ENCODE measurements at regions of chr19 and their contacts with region 1.

Region 1: GRCh38 chr19:34041925-34042521 is 130.3 kb upstream of the LSM14A start:
- DNase-seq: no peak
- H3K4me3 ChIP-seq: no peak overlapping the region
- H3K27ac ChIP-seq: no peak overlapping the region
- H3K4me1 ChIP-seq: no peaks in the 10 kb centered on the region
- H3K27me3 ChIP-seq: no peaks in the 10 kb centered on the region
- CTCF ChIP-seq: peak in 3 of 4 experiments; percentile 34 to 52 (median 48)
- POLR2A ChIP-seq: no peak

Region 2: DNA sequence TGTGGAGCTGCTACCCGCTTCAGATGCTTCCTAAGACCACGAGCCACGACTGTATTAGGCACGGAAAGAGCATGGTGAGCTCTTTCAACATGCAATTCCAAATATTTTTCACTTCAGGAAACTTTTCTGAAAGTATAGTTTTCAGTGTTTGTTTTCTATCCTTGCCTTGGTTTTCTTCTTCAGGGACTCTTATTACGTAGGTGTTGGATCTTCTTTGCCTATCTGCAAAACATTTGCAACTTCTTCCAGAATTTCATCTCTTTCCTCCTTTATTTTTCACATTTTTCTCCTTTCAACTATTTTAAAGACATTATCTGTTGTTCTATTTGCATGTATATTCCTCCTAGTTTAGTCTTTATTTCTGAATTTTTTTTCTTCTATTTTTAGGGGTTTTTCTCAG is 18.6 kb before region 1 on chr19:
- intact Hi-C with region 1: no loop called
- DNase-seq: no peak
- H3K4me3 ChIP-seq: no peak overlapping the region
- H3K27ac ChIP-seq: no peak overlapping the region
- H3K4me1 ChIP-seq: no peaks in the 10 kb centered on the region
- H3K27me3 ChIP-seq: no peaks in the 10 kb centered on the region
- CTCF ChIP-seq: no peak
- POLR2A ChIP-seq: no peak

Region 3: GRCh38 chr19:34096020-34096915 is 54.2 kb after region 1 on chr19:
- intact Hi-C with region 1: no loop called
- DNase-seq: peak; percentile 16
- H3K4me3 ChIP-seq: no peak overlapping the region
- H3K27ac ChIP-seq: no peak overlapping the region
- H3K4me1 ChIP-seq: no peaks in the 10 kb centered on the region
- H3K27me3 ChIP-seq: no peaks in the 10 kb centered on the region
- CTCF ChIP-seq: peak in 3 of 4 experiments; percentile 77 to 81 (median 77)
- POLR2A ChIP-seq: no peak

Region 4: GRCh38 chr19:34145741-34146202 is 103.7 kb after region 1 on chr19:
- intact Hi-C with region 1: loop called (anchors 5 kb)
- DNase-seq: peak; percentile 17
- H3K4me3 ChIP-seq: no peak overlapping the region
- H3K27ac ChIP-seq: no peak overlapping the region
- H3K4me1 ChIP-seq: no peaks in the 10 kb centered on the region
- H3K27me3 ChIP-seq: no peaks in the 10 kb centered on the region
- CTCF ChIP-seq: peak; percentile 70 to 81 (median 74)
- POLR2A ChIP-seq: no peak

Region 5: GRCh38 chr19:34428549-34429285 is 386.7 kb after region 1 on chr19:
- intact Hi-C with region 1: no loop called
- DNase-seq: peak; percentile 7
- H3K4me3 ChIP-seq: peak overlapping the region; percentile 60 to 85
- H3K27ac ChIP-seq: peak overlapping the region; percentile 82 to 84
- H3K4me1 ChIP-seq: no peaks in the 10 kb centered on the region
- H3K27me3 ChIP-seq: no peaks in the 10 kb centered on the region
- CTCF ChIP-seq: no peak
- POLR2A ChIP-seq: no peak

Measured in prostate gland (tissue), 2 donors.